ENCODE measurements at regions of chr7 and their contacts with region 1.

Region 1: DNA sequence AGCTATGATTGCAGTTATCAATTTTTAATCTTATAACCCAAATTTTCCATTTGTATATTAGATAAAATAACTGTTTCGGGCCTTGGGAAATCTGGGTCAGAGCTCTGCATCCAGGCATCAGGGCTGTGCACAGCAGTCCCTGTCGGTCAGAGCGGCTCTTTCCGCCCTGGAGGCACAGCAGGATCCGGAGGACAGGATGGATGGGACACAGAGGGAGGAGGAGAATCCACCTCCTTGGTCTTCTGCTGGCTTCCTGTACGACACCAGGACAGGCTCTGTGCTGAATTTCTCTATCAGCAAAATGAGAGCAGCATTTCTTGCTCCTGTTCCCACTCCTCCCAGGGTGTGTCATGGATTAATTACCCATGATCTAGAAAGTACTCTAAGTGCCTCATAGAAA is 254.9 kb downstream of the SKAP2 start:
- DNase-seq: peak; percentile 26
- ATAC-seq: peak; percentile 16; the same call in 1 of the 2 replicates
- H3K4me3 ChIP-seq: no peak overlapping the region
- H3K27ac ChIP-seq: peak overlapping the region; percentile 78
- H3K4me1 ChIP-seq: peaks cover 37% of the 10 kb centered on the region
- H3K27me3 ChIP-seq: no peaks in the 10 kb centered on the region
- CTCF ChIP-seq: no peak

Region 2: DNA sequence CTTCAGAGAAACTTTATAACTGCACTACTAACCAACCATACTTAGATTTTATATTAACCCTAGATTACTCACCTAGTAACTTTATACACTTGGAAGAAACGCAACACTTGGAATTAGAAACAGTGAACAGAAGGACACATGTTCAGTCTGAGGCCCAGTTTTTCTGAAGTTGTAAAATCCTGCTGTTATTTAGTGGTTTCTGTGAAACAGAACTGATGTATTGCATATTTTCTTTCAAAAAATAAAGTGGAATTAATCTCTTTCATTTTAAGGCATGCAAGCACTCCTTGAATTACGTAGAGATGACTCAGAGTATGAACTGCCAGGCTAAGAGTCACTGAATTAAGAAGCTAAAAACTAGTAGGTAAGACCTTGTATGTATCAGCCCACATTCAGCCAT is 39.0 kb after region 1 on chr7:
- CTCF ChIA-PET with region 1: no interaction called
- POLR2A ChIA-PET with region 1: no interaction called
- intact Hi-C with region 1: loop called (anchors 2 kb)
- DNase-seq: peak; percentile 85
- ATAC-seq: peak; percentile 97
- H3K4me3 ChIP-seq: peak overlapping the region; percentile 22; the same call in 1 of the 2 replicates
- H3K27ac ChIP-seq: peak overlapping the region; percentile 68
- H3K4me1 ChIP-seq: peaks cover 36% of the 10 kb centered on the region
- H3K27me3 ChIP-seq: no peaks in the 10 kb centered on the region
- CTCF ChIP-seq: no peak

Measured in PC-3 (cell line).